ENCODE measurements at regions of chr1 and their contacts with region 1.

Region 1: GRCh38 chr1:28160782-28161266 is 15.7 kb downstream of the PTAFR start:
- DNase-seq: peak; percentile 90
- ATAC-seq: peak; percentile 71
- H3K4me3 ChIP-seq: no peak overlapping the region
- H3K27ac ChIP-seq: peak overlapping the region; percentile 92
- H3K4me1 ChIP-seq: peaks cover 25% of the 10 kb centered on the region
- H3K27me3 ChIP-seq: no peaks in the 10 kb centered on the region
- CTCF ChIP-seq: no peak
- POLR2A ChIP-seq: no peak
- RAD21 ChIP-seq: no peak

Region 2: DNA sequence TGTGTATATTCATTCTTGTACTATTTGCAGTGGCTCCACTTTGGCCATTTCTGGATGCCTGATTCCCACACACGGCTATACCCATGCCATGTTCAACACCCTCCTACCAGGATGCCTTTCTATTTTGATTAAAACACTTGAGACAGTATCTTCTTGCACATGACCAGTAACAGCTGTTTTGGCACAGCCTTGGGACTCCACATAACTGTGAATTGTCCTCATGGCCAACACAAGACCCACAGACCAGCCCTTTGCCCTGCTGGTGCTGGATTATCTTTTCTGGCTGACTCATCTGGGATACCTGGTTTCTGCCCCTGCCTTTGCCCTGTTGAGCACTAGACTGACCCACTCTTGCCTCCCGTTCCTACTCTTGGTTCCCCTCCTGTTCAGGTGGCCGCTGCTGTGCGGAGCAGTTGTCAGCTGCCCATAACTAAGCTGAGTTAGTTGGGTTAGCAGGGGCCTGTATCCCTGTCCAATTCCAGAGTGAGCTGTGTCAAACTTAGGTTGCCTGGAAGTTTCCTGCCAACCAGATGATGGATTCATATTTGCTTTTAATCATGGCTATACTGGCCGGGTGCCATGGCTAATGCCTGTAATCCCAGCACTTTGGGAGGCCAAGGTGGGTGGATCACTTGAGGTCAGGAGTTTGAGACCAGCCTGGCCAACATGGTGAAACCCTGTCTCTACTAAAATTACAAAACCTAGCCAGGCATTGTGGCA is 61.6 kb before region 1 on chr1:
- CTCF ChIA-PET with region 1: no interaction called
- POLR2A ChIA-PET with region 1: no interaction called
- dilution Hi-C with region 1: no loop called
- in situ Hi-C with region 1: no loop called
- intact Hi-C with region 1: loop called (anchors 5 kb)
- DNase-seq: peak; percentile 26
- ATAC-seq: peak; percentile 69
- H3K4me3 ChIP-seq: no peak overlapping the region
- H3K27ac ChIP-seq: peak overlapping the region; percentile 61; the same call in 1 of the 2 replicates
- H3K4me1 ChIP-seq: peaks cover 5% of the 10 kb centered on the region
- H3K27me3 ChIP-seq: no peaks in the 10 kb centered on the region
- CTCF ChIP-seq: no peak
- POLR2A ChIP-seq: no peak
- RAD21 ChIP-seq: no peak

Region 3: GRCh38 chr1:28172713-28173150 is 11.9 kb after region 1 on chr1:
- CTCF ChIA-PET with region 1: no interaction called
- POLR2A ChIA-PET with region 1: interaction called, 13 read pairs
- dilution Hi-C with region 1: no loop called
- in situ Hi-C with region 1: no loop called
- intact Hi-C with region 1: no loop called
- DNase-seq: no peak
- ATAC-seq: peak; percentile 25; the same call in 1 of the 2 replicates
- H3K4me3 ChIP-seq: no peak overlapping the region
- H3K27ac ChIP-seq: peak overlapping the region; percentile 21; the same call in 1 of the 2 replicates
- H3K4me1 ChIP-seq: peaks cover 22% of the 10 kb centered on the region
- H3K27me3 ChIP-seq: no peaks in the 10 kb centered on the region
- CTCF ChIP-seq: no peak
- POLR2A ChIP-seq: no peak
- RAD21 ChIP-seq: no peak

Region 4: DNA sequence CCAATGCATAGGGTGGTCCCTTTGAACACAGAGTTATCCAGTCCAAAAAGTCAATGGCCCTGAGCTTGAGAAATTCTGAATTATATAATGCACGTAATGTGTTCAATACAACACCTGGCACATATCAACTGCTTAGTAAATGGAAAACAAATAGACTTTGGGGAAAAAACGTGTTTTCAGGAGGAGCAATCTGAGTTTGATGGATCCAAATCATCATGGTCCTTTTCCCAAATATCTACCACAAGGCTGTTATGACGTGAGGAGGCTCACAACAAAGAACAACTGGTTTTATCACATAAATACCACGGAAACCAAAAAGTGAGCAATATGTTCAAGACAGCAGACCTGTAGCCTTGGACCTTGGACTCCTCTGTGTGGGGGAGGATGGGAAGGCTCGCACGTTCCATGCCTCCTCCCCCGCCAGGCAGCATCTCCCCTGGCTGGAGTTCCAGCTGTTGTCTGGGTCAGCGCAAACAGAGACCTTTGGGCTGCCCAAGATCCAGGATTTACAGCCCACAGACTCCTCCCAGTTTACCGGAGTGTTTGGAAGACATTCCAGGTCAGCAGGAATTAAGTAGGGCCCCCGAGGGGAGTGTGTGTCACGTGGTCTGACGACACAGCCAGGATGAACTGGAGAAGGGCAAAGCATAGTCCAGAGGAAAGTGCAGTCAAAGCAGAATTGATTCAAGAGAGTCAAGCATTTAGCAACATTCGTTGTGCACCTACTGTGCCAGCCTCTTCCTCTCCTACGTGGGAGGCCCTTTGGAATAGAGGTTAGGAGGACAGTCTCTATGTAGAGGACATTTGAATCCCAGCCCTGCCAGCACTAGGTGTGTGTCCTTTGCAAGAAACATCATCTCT is 135.8 kb after region 1 on chr1:
- CTCF ChIA-PET with region 1: no interaction called
- POLR2A ChIA-PET with region 1: no interaction called
- dilution Hi-C with region 1: no loop called
- in situ Hi-C with region 1: no loop called
- intact Hi-C with region 1: no loop called
- DNase-seq: no peak
- ATAC-seq: peak; percentile 73
- H3K4me3 ChIP-seq: no peak overlapping the region; the same call in 1 of the 2 replicates
- H3K27ac ChIP-seq: no peak overlapping the region
- H3K4me1 ChIP-seq: peaks cover 2% of the 10 kb centered on the region; the same call in 1 of the 2 replicates
- H3K27me3 ChIP-seq: no peaks in the 10 kb centered on the region; the same call in 1 of the 2 replicates
- CTCF ChIP-seq: no peak
- POLR2A ChIP-seq: no peak
- RAD21 ChIP-seq: no peak